B cell (primary cell): ENCODE measurements at regions of chr6 and their contacts with region 1.

Region 1: DNA sequence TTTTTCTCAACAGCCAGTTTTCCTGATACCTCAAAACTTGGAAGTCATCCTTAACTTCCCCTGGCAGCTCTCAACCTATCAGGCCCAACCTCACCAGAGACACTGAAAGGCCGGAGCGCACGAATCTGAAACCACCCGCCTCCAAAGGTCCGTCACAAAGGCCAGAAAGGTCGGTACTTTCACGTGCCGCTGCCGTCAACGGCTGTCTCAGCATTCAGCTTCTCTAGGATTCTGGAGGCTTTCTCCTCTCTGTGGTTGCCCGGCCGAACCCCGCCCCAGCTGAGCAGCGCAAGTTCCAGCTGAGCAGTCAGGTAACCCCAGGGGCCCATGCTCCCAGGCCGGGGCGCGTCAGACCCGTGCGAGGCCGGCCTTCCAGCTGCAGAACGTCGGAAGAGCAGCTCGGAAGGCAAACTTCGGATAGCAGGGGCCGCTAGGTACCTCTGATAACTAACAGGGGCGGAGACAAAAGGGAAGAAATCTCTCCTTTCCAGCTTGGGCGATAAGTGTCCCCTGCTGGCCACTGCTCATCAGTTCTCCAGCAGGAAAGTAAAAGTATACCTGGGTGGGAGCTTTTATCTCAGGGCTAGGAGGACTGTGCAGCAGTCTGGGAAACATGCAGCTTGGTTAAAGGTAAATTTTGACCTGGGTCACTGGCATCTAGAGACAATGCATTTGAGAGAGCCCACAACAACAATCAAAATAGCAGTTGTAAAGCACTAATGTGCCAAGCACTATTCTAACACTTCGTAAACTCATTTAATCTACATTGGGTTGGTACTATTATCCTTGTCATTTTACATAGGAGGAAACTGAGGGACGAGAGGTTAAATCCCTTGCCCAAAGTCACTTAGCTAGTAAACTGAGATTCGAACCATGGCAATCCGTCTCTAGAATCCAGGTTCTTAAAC is 16.1 kb downstream of the ZSCAN12 start:
- DNase-seq: peak; percentile 93
- ATAC-seq: peak; percentile 98
- H3K4me3 ChIP-seq: peak overlapping the region; percentile 45 to 64 (median 55)
- H3K4me3 Mint-ChIP-seq: peak overlapping the region; percentile 92
- H3K27ac ChIP-seq: peak overlapping the region; percentile 75 to 93
- H3K27ac Mint-ChIP-seq: peak overlapping the region; percentile 94
- H3K4me1 ChIP-seq: peaks cover 11 to 16% of the 10 kb centered on the region in 2 donors
- H3K4me1 Mint-ChIP-seq: peaks cover 19% of the 10 kb centered on the region
- H3K27me3 ChIP-seq: no peaks in the 10 kb centered on the region
- H3K27me3 Mint-ChIP-seq: no peaks in the 10 kb centered on the region
- CTCF ChIP-seq: peak; percentile 42

Region 2: GRCh38 chr6:27111743-27112142 is 1271.7 kb before region 1 on chr6:
- CTCF ChIA-PET with region 1: no interaction called
- POLR2A ChIA-PET with region 1: no interaction called
- intact Hi-C with region 1: no loop called
- DNase-seq: no peak
- ATAC-seq: no peak
- H3K4me3 ChIP-seq: no peak overlapping the region
- H3K4me3 Mint-ChIP-seq: no peak overlapping the region
- H3K27ac ChIP-seq: no peak overlapping the region
- H3K27ac Mint-ChIP-seq: no peak overlapping the region
- H3K4me1 ChIP-seq: no peaks in the 10 kb centered on the region
- H3K4me1 Mint-ChIP-seq: no peaks in the 10 kb centered on the region
- H3K27me3 ChIP-seq: peaks cover 0 to 8% (median 0%) of the 10 kb centered on the region in 4 experiments
- H3K27me3 Mint-ChIP-seq: peaks cover 32% of the 10 kb centered on the region
- CTCF ChIP-seq: no peak

Region 3: GRCh38 chr6:28080631-28081485 is 302.6 kb before region 1 on chr6:
- CTCF ChIA-PET with region 1: no interaction called
- POLR2A ChIA-PET with region 1: no interaction called
- intact Hi-C with region 1: loop called (anchors 1 kb)
- DNase-seq: peak; percentile 98
- ATAC-seq: peak; percentile 67
- H3K4me3 ChIP-seq: peak overlapping the region; percentile 67 to 96 (median 88)
- H3K4me3 Mint-ChIP-seq: peak overlapping the region; percentile 92
- H3K27ac ChIP-seq: peak overlapping the region; percentile 94 to 100
- H3K27ac Mint-ChIP-seq: peak overlapping the region; percentile 98
- H3K4me1 ChIP-seq: peaks cover 10 to 22% of the 10 kb centered on the region in 2 donors
- H3K4me1 Mint-ChIP-seq: peaks cover 36% of the 10 kb centered on the region
- H3K27me3 ChIP-seq: no peaks in the 10 kb centered on the region
- H3K27me3 Mint-ChIP-seq: no peaks in the 10 kb centered on the region
- CTCF ChIP-seq: no peak

Region 4: GRCh38 chr6:28252009-28252975 is 131.2 kb before region 1 on chr6 and contains the start of gene ZKSCAN4:
- CTCF ChIA-PET with region 1: interaction called, 4 read pairs
- POLR2A ChIA-PET with region 1: no interaction called
- intact Hi-C with region 1: loop called (anchors 1 kb)
- DNase-seq: peak; percentile 89
- ATAC-seq: peak; percentile 90
- H3K4me3 ChIP-seq: peak within 1 kb of the TSS; percentile 59 to 99 (median 94)
- H3K4me3 Mint-ChIP-seq: peak within 1 kb of the TSS; percentile 98
- H3K27ac ChIP-seq: peak within 1 kb of the TSS; percentile 22 to 58
- H3K27ac Mint-ChIP-seq: peak within 1 kb of the TSS; percentile 78
- H3K4me1 ChIP-seq: peaks cover 14 to 20% of the 10 kb centered on the region in 2 donors
- H3K4me1 Mint-ChIP-seq: peaks cover 31% of the 10 kb centered on the region
- H3K27me3 ChIP-seq: peaks cover 0 to 3% (median 2%) of the 10 kb centered on the region in 4 experiments
- H3K27me3 Mint-ChIP-seq: no peaks in the 10 kb centered on the region
- CTCF ChIP-seq: no peak
- total RNA-seq, gene ZKSCAN4: 10.9 and 12.1 TPM in 2 replicates

Region 5: DNA sequence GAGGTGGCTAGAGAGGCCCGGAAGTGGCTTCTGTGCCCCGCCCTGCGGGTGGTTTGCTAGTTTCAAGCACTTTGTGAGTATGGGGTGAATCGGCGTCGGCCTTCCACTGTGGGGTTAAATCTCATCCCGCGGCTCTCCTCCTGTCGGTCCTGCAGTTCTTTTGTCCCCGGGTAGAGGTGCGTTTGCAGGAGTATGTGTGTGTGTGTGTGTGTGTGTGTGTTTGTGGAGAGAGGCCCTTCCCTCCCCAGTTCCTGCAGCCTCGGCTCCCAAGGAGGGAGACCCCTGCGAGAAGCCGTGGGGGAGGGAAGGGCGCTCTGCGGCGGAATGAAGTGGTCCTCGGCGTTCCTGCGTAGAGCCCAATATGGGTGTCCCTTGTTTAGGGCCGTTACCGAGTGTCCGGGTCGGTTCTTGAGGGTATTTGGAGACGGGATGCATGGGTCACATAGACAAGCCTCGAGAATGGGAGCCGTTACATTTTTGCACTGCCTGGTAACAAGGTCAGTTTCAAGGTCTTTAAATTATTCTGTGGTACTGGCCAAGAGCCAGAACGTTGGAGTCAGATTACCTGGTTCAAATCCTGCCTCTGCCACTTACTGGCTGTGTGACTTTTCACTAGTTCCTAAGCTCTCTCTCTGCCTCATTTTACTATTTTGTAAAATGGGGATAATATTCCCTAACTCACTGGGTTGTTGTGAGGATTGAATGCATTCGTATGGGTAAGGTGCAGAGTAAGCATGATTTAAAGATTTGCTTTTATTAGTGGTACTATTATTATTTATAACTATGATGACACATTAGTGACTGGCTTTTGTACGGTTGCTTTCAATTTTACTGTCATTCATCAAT is 33.4 kb before region 1 on chr6 and contains the start of gene ZKSCAN3:
- CTCF ChIA-PET with region 1: interaction called, 37 read pairs
- POLR2A ChIA-PET with region 1: interaction called, 7 read pairs
- intact Hi-C with region 1: loop called (anchors 1 kb)
- DNase-seq: peak; percentile 81
- ATAC-seq: peak; percentile 99
- H3K4me3 ChIP-seq: peak within 1 kb of the TSS; percentile 59 to 88 (median 77)
- H3K4me3 Mint-ChIP-seq: peak within 1 kb of the TSS; percentile 92
- H3K27ac ChIP-seq: peak within 1 kb of the TSS; percentile 26 to 58
- H3K27ac Mint-ChIP-seq: peak within 1 kb of the TSS; percentile 83
- H3K4me1 ChIP-seq: peaks cover 10 to 11% of the 10 kb centered on the region in 2 donors
- H3K4me1 Mint-ChIP-seq: peaks cover 23% of the 10 kb centered on the region
- H3K27me3 ChIP-seq: peaks cover 0 to 3% (median 0%) of the 10 kb centered on the region in 4 experiments
- H3K27me3 Mint-ChIP-seq: peaks cover 8% of the 10 kb centered on the region
- CTCF ChIP-seq: no peak
- total RNA-seq, gene ZKSCAN3: 11.0 and 11.9 TPM in 2 replicates

Region 6: DNA sequence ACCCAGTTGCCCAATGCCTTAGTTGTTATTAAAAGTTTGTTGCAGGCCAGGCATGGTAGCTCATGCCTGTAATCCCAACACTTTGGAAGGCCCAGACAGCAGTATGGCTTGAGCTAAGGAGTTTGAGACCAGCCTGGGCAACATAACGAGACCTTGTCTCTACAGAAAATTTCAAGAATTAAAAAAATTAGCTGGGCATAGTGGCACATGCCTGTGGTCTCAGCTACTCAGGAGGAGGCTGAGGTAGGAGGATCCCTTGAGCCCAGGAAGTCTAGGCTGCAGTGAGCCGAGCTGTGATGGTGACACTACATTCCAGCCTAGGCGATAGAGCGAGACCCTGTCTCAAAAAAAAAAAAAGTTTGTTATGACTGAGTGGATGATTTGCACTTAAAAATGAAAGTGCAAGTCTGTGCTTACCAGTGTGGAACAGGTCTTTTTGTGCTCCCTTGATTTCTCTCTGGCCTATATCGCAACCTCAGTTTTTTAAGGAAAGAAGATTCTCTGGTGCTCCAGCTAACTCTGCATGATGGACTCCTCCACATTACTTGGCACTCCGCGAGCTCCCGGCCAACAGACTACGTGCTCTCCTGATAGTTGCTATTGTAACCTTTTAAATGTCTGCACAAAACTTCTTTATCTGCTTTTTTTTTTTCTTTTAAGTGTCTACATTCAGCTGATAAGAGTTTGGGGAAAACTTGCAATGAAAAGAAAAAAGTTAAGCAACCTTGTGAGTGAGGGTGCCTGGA is 11.6 kb before region 1 on chr6:
- CTCF ChIA-PET with region 1: interaction called, 6 read pairs
- POLR2A ChIA-PET with region 1: no interaction called
- intact Hi-C with region 1: loop called (anchors 1 kb)
- DNase-seq: peak; percentile 57
- ATAC-seq: peak; percentile 78
- H3K4me3 ChIP-seq: no peak overlapping the region
- H3K4me3 Mint-ChIP-seq: peak overlapping the region; percentile 64
- H3K27ac ChIP-seq: peak overlapping the region; percentile 23 to 57
- H3K27ac Mint-ChIP-seq: peak overlapping the region; percentile 93
- H3K4me1 ChIP-seq: peaks cover 22 to 23% of the 10 kb centered on the region in 2 donors
- H3K4me1 Mint-ChIP-seq: peaks cover 24% of the 10 kb centered on the region
- H3K27me3 ChIP-seq: no peaks in the 10 kb centered on the region
- H3K27me3 Mint-ChIP-seq: no peaks in the 10 kb centered on the region
- CTCF ChIP-seq: no peak

Region 7: DNA sequence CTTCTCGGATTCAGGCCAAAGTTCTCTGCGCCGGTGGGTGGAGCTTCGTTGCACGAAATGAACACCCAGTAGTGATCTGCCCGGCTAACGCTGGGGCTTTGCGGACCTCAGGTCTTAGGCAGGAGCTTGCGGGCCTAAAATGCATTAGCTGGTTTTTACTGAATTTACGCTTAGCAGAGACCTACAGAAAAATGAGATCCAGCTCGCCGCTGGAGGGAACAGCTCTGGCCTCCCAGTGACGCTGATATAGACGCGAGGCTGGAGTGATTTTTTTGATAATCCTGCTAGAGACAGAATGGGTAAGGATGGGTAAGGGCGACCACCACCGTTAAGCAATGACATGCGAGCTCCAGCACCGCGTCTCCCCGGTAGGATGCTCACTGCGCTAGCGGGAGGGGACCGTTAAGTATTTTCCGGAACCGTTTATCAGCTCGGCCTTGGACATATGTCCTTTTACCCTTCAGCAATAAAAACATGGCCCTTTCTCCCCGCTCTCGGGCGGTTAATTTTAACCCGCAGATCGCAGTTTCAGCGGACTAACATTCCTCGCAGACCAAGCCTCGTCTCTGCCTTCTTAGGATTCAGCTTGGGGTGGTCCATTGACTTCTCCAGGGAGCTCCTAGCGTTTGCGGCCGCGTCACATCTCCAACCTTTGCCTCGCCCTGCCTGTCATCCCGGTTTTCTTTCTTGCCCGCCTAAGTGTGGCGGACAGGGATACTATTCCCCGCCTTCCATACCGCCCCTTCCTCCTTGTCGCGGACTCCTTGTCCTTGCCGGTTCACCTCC is 251.5 kb after region 1 on chr6:
- CTCF ChIA-PET with region 1: no interaction called
- POLR2A ChIA-PET with region 1: no interaction called
- intact Hi-C with region 1: no loop called
- DNase-seq: peak; percentile 20
- ATAC-seq: no peak
- H3K4me3 ChIP-seq: peak overlapping the region in 1 of 5 experiments; percentile 9
- H3K4me3 Mint-ChIP-seq: peak overlapping the region; percentile 6
- H3K27ac ChIP-seq: no peak overlapping the region
- H3K27ac Mint-ChIP-seq: no peak overlapping the region
- H3K4me1 ChIP-seq: peaks cover 6 to 8% of the 10 kb centered on the region in 2 donors
- H3K4me1 Mint-ChIP-seq: peaks cover 12% of the 10 kb centered on the region
- H3K27me3 ChIP-seq: peaks cover 0 to 51% (median 37%) of the 10 kb centered on the region in 4 experiments
- H3K27me3 Mint-ChIP-seq: peaks cover 73% of the 10 kb centered on the region
- CTCF ChIP-seq: no peak